ENCODE measurements at regions of chr20 and their contacts with region 1.

Region 1: DNA sequence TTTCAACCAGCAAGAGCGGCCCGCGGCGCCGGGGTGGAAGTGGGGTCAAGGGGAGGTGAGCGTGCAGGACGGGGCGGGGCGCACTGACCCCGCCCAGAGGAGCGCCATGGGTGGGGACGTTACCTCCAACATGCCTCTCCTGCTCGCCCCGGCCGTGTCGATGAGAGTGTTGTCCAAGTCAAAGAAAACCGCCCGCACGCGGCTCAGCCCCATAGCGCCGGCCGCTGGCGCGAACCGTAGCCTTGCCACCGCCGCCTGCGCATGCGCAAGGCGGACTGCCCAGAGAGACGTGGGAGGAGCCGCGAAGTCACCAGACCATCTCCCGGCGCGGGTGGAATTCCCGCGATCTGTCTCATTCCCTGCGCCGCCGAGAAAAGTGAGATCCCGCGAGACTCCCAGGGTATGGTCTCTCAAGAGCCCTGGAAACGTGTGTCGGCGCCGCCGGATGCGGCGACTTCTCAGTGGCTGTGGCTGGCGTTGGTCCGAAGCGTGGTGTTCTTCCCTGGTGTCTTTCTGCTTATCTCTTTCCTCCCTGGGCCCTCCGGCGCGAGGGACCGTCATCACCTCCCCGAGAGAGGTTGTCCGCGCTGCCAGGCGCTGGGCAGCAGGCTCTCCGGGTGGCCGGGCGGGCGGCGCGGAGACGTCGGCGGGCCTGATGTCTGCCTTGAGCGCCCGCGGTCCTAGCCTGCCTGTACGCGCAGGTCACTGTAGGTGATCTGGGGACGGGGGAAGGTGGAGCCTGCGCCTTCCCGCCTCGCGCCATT is at the start of gene NANP:
- DNase-seq: peak; percentile 96
- H3K4me3 Mint-ChIP-seq: peak within 1 kb of the TSS; percentile 78
- H3K27ac Mint-ChIP-seq: peak within 1 kb of the TSS; percentile 96
- H3K4me1 Mint-ChIP-seq: peaks cover 18% of the 10 kb centered on the region
- H3K27me3 Mint-ChIP-seq: no peaks in the 10 kb centered on the region
- total RNA-seq, gene NANP: 6.5 to 7.3 TPM

Region 2: DNA sequence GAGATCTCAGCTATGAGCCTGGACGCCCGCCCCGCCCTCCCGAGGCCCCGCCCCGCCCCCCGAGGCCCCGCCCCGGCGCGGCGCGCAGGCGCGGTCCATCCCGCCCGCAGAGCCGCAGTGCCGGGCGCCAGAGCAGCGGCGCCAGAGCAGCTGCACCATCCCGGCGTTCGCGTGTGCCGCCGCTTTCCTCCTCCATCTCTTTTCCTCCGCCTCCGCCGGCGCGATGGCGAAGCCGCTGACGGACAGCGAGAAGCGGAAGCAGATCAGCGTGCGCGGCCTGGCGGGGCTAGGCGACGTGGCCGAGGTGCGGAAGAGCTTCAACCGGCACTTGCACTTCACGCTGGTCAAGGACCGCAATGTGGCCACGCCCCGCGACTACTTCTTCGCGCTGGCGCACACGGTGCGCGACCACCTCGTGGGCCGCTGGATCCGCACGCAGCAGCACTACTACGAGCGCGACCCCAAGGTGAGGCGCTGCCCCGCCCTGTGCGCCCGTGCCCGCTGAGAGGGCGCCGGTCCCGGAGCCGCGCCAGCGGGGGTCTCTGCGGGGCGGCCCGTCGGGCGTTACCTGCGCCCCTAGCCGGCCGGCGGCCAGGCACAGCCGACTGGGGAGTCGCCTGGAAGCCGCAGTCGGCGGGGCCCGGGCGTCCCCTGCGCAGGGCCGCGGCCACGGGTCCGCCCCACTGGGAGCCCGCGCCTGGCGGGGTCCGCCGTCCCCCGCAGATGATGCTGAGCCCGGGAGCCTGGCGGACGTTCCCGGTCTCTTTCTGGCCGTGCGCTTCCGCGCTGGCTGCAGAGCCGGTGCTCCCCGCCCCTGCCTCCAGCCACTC is 375.7 kb before region 1 on chr20 and contains the start of gene PYGB:
- CTCF ChIA-PET with region 1: no interaction called
- POLR2A ChIA-PET with region 1: no interaction called
- intact Hi-C with region 1: loop called (anchors 5 kb)
- DNase-seq: peak; percentile 81
- H3K4me3 Mint-ChIP-seq: peak within 1 kb of the TSS; percentile 91
- H3K27ac Mint-ChIP-seq: peak within 1 kb of the TSS; percentile 88
- H3K4me1 Mint-ChIP-seq: peaks cover 50% of the 10 kb centered on the region
- H3K27me3 Mint-ChIP-seq: no peaks in the 10 kb centered on the region
- total RNA-seq, gene PYGB: 23.4 to 24.0 TPM

Region 3: DNA sequence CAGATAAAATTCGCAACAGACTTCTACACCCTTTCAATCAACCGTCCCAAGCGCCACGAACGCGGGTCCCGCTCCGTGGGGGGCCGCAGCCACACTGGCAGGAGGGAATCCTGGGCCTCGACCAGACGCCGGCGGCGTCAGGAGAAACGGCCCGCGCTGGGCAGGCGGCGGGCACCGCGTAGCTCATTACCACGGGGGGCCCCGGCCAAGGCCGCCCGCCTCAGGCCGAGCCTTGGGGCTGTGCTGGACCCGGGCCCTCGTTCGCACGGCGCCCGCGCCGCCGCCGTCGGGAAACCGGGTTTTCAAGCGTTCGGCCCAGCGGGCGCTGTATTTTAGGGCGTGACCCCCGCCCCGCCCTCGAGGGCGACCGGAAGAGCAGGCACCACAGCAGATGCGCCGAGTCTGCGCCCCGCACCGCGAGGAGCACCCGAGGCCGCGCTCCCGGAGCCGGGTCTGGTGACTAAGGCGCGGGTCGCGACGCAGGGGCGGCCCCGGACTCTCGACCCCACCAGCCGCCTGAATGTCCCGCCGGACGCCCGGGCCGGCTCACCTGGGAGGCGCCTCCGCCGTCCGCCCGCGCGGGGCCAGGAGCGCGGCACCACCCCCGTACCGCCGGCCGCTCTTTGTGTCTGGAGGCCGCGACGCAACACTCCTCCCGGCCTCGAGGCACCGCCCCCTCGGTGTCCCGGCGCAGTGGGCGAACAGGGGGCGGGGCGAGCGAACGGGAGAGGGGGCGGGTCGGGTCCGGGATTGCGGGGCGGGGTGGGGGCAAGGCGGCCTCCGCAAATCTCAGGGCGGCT is 38.8 kb before region 1 on chr20 and contains the start of gene NINL:
- CTCF ChIA-PET with region 1: no interaction called
- POLR2A ChIA-PET with region 1: interaction called, 3 read pairs
- intact Hi-C with region 1: loop called (anchors 1 kb)
- DNase-seq: peak; percentile 61
- H3K4me3 Mint-ChIP-seq: peak within 1 kb of the TSS; percentile 75
- H3K27ac Mint-ChIP-seq: peak within 1 kb of the TSS; percentile 1
- H3K4me1 Mint-ChIP-seq: peaks cover 10% of the 10 kb centered on the region
- H3K27me3 Mint-ChIP-seq: no peaks in the 10 kb centered on the region
- total RNA-seq, gene NINL: 2.7 to 3.9 TPM

Region 4: GRCh38 chr20:25696384-25697131 is 72.6 kb after region 1 on chr20 and contains the start of gene ZNF337:
- CTCF ChIA-PET with region 1: no interaction called
- POLR2A ChIA-PET with region 1: no interaction called
- intact Hi-C with region 1: loop called (anchors 1 kb)
- DNase-seq: peak; percentile 97
- H3K4me3 Mint-ChIP-seq: peak within 1 kb of the TSS; percentile 89
- H3K27ac Mint-ChIP-seq: peak within 1 kb of the TSS; percentile 77
- H3K4me1 Mint-ChIP-seq: peaks cover 21% of the 10 kb centered on the region
- H3K27me3 Mint-ChIP-seq: no peaks in the 10 kb centered on the region
- total RNA-seq, gene ZNF337: 12.1 to 12.5 TPM